Dorsolateral prefrontal cortex (tissue), 120 donors: ENCODE measurements at regions of chr3 and their contacts with region 1.

Region 1: GRCh38 chr3:112984485-112984884 is 6.3 kb upstream of the GTPBP8 start:
- DNase-seq: no peak
- H3K4me3 ChIP-seq: no peak overlapping the region
- H3K27ac ChIP-seq: no peak overlapping the region
- H3K27me3 ChIP-seq: no peaks in the 10 kb centered on the region
- CTCF ChIP-seq: no peak

Region 2: GRCh38 chr3:111963424-111963823 is 1021.1 kb before region 1 on chr3:
- intact Hi-C with region 1: no loop called
- DNase-seq: no peak
- H3K4me3 ChIP-seq: no peak overlapping the region
- H3K27ac ChIP-seq: no peak overlapping the region
- H3K27me3 ChIP-seq: no peaks in the 10 kb centered on the region
- CTCF ChIP-seq: no peak

Region 3: DNA sequence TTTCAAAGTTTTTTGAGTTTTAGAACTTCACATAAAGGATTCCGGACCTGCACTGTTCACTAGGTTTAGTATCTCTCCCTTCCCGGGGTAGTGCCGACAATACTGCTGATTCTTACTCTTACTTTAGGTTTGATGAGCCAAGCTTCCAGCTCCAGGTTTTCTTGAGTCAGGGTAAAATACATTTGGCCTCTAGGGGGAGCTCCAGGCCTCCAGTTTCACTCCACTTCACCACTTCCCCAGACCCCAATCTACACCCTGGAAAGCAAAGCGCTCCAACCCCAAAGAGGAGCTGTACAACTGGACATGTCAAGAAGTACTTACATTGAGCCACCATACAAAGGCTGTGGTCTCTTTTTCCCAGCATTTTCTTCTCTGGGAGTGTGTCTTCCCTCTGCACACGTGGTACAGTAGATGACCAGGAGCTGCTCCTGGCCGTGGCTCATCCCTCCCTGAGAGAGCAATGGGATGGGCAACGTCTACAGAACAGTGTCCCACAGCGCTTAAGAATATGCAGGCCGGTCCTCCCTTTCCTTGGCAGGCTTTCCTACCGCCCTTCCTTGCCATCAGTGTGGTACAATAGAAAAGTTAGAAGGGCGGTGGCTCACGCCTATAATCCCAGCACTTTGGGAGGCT is 249.7 kb before region 1 on chr3:
- intact Hi-C with region 1: loop called in 1 of 2 experiments (anchors 10 kb)
- DNase-seq: peak in 1 of 10 donors; percentile 31
- H3K4me3 ChIP-seq: no peak overlapping the region
- H3K27ac ChIP-seq: no peak overlapping the region
- H3K27me3 ChIP-seq: peaks cover 0 to 4% (median 0%) of the 10 kb centered on the region in 45 donors
- CTCF ChIP-seq: peak; percentile 28 to 74 (median 56)